CD4-positive, alpha-beta memory T cell (primary cell): ENCODE measurements at regions of chr7 and their contacts with region 1.

Region 1: DNA sequence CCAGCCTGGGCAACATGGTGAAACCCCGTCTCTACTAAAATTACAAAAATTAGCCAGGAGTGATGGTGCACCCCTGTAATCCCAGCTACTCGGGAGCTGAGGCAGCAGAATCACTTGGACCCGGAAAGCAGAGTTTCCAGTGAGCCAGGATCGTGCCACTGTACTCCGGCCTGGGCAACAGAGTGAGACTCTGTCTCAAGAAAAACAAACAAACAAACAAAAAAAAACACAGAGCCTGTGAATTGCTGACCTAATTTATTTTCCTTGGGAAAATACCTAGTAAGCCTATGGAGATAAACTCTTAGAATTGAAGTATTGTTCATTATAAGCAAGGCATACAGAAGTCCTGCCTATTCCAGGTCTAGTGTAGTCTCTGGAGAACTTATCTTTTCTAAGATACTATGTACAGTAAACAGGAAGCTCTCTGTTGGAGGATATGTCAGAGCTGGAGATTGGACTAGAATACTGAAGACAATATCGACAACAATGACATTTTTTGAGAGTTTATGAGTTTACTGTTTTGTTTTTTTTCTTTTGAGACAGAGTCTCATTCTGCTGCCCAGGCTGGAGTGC is 14.9 kb downstream of the GTF2I start:
- DNase-seq: no peak
- H3K4me3 ChIP-seq: no peak overlapping the region
- H3K4me3 Mint-ChIP-seq: no peak overlapping the region
- H3K27ac ChIP-seq: no peak overlapping the region
- H3K27ac Mint-ChIP-seq: peak overlapping the region in 1 of 7 donors; percentile 64
- H3K4me1 ChIP-seq: peaks cover 27% of the 10 kb centered on the region
- H3K4me1 Mint-ChIP-seq: peaks cover 13 to 46% (median 29%) of the 10 kb centered on the region in 4 donors
- H3K27me3 ChIP-seq: no peaks in the 10 kb centered on the region
- H3K27me3 Mint-ChIP-seq: no peaks in the 10 kb centered on the region

Region 2: DNA sequence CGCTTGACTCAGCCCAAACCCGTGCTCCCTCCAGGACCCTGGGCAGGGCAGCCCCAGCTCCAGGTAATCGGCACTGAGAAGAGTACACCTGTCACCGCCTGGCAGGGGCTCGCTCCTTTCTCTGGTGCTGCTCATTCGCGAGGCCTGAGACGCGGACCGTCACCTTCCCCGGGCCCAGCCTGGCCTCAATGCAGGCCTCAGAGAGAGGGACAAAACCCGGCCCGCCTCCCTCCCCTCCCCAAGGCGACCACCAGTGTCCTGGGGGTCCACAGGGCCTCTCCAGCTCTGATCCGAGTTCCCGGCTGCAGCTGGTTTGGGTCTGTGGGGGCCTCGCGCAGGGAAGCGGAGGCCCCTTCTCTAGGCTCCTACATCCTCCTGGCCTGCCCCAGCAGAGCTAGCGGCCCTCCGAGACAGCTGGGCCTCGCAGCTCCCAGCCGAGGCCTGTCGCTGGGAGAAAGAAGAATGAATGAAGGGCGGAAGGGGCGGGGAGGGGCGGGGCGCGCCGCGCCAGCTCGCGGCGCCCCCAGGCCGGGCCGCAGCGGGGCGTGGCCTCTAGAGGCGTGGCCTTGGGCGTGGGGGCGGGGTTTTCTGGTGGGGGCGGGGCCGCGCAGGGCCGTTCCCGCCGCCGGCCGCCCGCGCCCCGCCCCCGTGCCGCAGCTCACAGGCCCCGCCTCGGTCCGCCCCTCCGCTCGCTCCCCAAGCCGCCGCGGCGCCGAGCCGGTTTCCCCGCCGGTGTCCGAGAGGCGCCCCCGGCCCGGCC is 589.1 kb before region 1 on chr7 and contains the start of gene LIMK1:
- CTCF ChIA-PET with region 1: no interaction called
- POLR2A ChIA-PET with region 1: no interaction called
- intact Hi-C with region 1: no loop called
- DNase-seq: peak; percentile 78 to 87 (median 83)
- H3K4me3 ChIP-seq: peak within 1 kb of the TSS; percentile 42 to 43
- H3K4me3 Mint-ChIP-seq: peak within 1 kb of the TSS; percentile 75 to 87 (median 82)
- H3K27ac ChIP-seq: peak within 1 kb of the TSS; percentile 49
- H3K27ac Mint-ChIP-seq: peak within 1 kb of the TSS; percentile 4 to 93 (median 76)
- H3K4me1 ChIP-seq: peaks cover 16% of the 10 kb centered on the region
- H3K4me1 Mint-ChIP-seq: peaks cover 4 to 15% (median 9%) of the 10 kb centered on the region in 4 donors
- H3K27me3 ChIP-seq: no peaks in the 10 kb centered on the region
- H3K27me3 Mint-ChIP-seq: no peaks in the 10 kb centered on the region
- total RNA-seq, gene LIMK1: 13.4 to 15.1 TPM

Region 3: GRCh38 chr7:74625446-74625845 is 47.0 kb before region 1 on chr7:
- CTCF ChIA-PET with region 1: no interaction called
- POLR2A ChIA-PET with region 1: no interaction called
- intact Hi-C with region 1: loop called (anchors 5 kb)
- DNase-seq: peak in 4 of 5 donors; percentile 16 to 25 (median 18)
- H3K4me3 ChIP-seq: no peak overlapping the region
- H3K4me3 Mint-ChIP-seq: no peak overlapping the region
- H3K27ac ChIP-seq: no peak overlapping the region
- H3K27ac Mint-ChIP-seq: no peak overlapping the region
- H3K4me1 ChIP-seq: no peaks in the 10 kb centered on the region
- H3K4me1 Mint-ChIP-seq: peaks cover 0 to 3% (median under 1%) of the 10 kb centered on the region in 4 donors
- H3K27me3 ChIP-seq: no peaks in the 10 kb centered on the region
- H3K27me3 Mint-ChIP-seq: no peaks in the 10 kb centered on the region